Heart left ventricle (tissue), 16 donors: ENCODE measurements at regions of chr16 and their contacts with region 1.

Region 1: GRCh38 chr16:3059000-3059722 is 6.3 kb upstream of the IL32 start:
- DNase-seq: peak; percentile 91 to 96 (median 94)
- ATAC-seq: peak; percentile 78 to 95 (median 94)
- H3K4me3 ChIP-seq: peak overlapping the region; percentile 77 to 99 (median 94)
- H3K27ac ChIP-seq: peak overlapping the region; percentile 44 to 94 (median 88)
- H3K4me1 ChIP-seq: peaks cover 0 to 63% (median 19%) of the 10 kb centered on the region in 12 donors
- H3K27me3 ChIP-seq: no peaks in the 10 kb centered on the region
- CTCF ChIP-seq: peak; percentile 85 to 99 (median 96)
- POLR2A ChIP-seq: peak in 1 of 2 donors; percentile 58

Region 2: DNA sequence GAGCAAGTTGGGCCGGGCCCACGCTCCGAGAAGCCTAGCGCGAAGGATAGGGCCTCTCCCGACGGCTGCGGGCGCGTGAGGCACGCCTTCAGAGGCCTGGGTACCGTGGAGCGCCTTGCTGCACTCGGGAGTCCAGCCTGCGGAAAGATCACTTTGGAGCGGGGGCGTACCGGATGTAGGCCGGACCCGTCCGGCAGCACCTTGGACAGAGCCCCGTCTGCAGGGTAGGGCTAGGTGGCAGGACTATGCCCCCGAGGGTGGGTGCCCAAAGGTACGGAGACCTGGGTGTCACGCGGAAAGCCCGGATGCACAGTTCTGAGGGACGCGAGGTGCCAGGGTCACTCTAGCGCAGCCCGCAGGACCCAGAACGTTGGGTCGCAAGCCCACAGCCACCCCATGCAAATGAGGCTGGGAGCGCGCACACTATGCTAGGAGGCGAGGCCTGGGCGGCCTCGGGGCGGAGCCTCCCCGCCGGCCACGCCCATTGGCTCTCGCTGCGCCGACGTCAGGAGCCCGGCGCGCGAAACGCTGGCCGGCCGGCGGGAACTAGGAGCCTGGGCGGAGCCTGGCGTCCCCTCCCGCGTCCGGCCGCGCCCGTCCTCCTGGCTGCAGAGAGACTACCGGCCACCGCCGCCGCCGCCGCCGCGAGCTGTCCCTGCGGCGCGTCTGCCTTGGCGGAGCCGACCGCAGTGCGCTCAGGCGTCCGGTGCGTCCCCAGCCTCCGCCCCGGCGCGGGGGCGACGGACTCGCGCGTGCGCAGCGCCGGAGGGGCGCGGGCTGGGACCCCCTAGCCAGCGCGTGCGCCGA is 90.2 kb before region 1 on chr16 and contains the start of gene PAQR4:
- intact Hi-C with region 1: no loop called
- DNase-seq: peak; percentile 88 to 95 (median 90)
- ATAC-seq: peak; percentile 90 to 95 (median 92)
- H3K4me3 ChIP-seq: peak within 1 kb of the TSS; percentile 62 to 95 (median 78)
- H3K27ac ChIP-seq: peak within 1 kb of the TSS in 11 of 12 donors; percentile 24 to 79 (median 55)
- H3K4me1 ChIP-seq: peaks cover 3 to 64% (median 40%) of the 10 kb centered on the region in 12 donors
- H3K27me3 ChIP-seq: peaks cover 41 to 46% (median 42%) of the 10 kb centered on the region in 9 donors
- CTCF ChIP-seq: no peak
- POLR2A ChIP-seq: peak in 1 of 2 donors; percentile 77
- total RNA-seq, gene PAQR4: 6.9 to 16.3 (median 9.0) TPM

Region 3: DNA sequence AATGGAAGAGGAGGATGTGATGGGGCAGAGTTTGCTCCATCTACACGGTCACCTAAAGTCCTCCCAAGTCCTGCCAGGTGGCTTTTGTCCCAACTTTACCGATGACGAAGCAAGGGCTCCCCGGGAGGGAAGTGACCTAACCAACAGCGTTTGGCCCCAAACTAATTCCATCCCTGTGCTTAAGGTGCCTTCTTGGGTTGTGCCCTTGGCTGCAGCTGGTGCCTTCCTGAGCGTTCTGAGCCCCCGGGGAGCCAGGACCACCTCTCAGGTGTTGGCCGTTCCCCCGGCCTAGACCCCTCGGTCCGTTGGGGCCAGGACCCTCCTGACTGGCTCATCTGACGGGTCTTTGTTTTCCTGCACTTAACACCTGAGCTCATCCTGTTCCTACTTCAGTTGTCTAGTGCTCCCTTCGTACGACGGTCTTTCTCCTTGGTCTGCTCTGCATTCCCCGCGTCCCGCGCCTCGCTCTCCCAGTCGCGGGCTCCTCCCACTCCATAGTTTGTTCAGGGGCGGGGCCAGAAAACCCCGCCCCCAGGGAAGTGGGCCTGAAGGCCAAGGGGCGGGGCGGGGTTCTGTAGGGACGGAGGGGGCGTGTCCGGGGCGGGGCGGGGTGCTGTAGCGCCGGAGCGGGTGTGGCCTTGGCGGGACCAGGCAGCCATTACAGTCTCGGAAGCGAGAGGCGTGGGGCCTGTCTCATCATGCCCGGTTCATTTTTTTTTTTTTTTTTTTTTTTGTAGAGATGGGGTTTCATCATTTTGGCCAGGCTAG is 40.8 kb after region 1 on chr16:
- intact Hi-C with region 1: loop called in 2 of 10 experiments (anchors 5 kb)
- DNase-seq: peak; percentile 92 to 96 (median 93)
- ATAC-seq: peak; percentile 76 to 96 (median 94)
- H3K4me3 ChIP-seq: peak overlapping the region in 9 of 12 donors; percentile 17 to 40 (median 31)
- H3K27ac ChIP-seq: peak overlapping the region in 9 of 12 donors; percentile 55 to 91 (median 80)
- H3K4me1 ChIP-seq: peaks cover 9 to 48% (median 23%) of the 10 kb centered on the region in 12 donors
- H3K27me3 ChIP-seq: no peaks in the 10 kb centered on the region
- CTCF ChIP-seq: no peak
- POLR2A ChIP-seq: peak in 1 of 2 donors; percentile 9

Region 4: GRCh38 chr16:3123986-3124886 is 65.1 kb after region 1 on chr16:
- intact Hi-C with region 1: loop called in 9 of 10 experiments (anchors 1 to 5 kb)
- DNase-seq: peak; percentile 96 to 97 (median 97)
- ATAC-seq: peak; percentile 96 to 98 (median 98)
- H3K4me3 ChIP-seq: peak overlapping the region; percentile 58 to 91 (median 66)
- H3K27ac ChIP-seq: peak overlapping the region; percentile 14 to 91 (median 74)
- H3K4me1 ChIP-seq: peaks cover 0 to 47% (median 22%) of the 10 kb centered on the region in 12 donors
- H3K27me3 ChIP-seq: no peaks in the 10 kb centered on the region
- CTCF ChIP-seq: peak in 6 of 12 donors; percentile 22 to 42 (median 26)
- POLR2A ChIP-seq: no peak

Region 5: DNA sequence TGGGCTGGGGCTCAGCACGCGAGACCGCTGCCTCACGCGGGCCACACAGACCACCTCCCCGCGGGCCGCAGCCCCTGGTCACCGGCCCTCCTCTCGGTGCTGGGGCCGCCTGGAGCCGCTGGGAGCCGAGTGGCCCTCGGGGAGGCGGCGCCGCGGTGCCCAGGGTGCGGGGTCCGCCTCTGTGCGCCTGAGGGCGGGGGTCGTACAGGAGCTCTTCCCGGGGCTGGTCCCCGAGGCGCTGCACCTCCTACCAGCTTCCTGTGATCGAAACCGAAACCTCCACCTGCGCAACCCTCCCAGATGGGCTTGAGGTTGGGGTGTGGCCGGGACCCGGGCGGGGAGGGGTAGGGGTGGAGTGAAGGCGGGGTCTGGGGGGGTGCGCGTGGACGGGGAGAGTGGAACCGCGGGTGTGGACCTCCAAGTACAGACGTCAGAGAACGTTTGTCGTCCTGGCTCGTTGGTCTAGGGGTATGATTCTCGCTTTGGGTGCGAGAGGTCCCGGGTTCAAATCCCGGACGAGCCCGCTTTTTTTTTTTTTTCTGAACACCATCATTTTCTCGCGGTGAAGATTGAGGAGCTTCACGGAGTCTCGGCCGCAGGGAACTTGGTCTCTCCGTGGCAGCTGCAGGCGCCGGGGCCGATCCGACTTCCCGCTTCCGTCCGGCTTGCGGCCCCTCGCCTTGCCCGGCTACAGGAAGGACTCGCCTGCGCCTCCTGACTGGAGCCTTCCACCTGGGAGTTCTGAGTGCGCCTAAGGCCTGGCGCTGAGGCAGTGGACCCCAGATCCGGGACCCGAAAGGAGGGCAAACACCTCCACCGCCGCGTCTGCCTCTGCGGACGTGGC is 99.5 kb after region 1 on chr16:
- intact Hi-C with region 1: loop called in 2 of 10 experiments (anchors 5 to 10 kb)
- DNase-seq: peak; percentile 82 to 92 (median 88)
- ATAC-seq: peak; percentile 80 to 91 (median 88)
- H3K4me3 ChIP-seq: peak overlapping the region; percentile 47 to 84 (median 73)
- H3K27ac ChIP-seq: peak overlapping the region; percentile 81 to 94 (median 88)
- H3K4me1 ChIP-seq: peaks cover 0 to 25% (median 12%) of the 10 kb centered on the region in 12 donors
- H3K27me3 ChIP-seq: peaks cover 0 to 4% (median 0%) of the 10 kb centered on the region in 9 donors
- CTCF ChIP-seq: peak in 1 of 12 donors; percentile 14
- POLR2A ChIP-seq: no peak

Region 6: GRCh38 chr16:3457434-3458252 is 398.5 kb after region 1 on chr16:
- intact Hi-C with region 1: loop called in 1 of 10 experiments (anchors 10 kb)
- DNase-seq: peak; percentile 91 to 95 (median 93)
- ATAC-seq: peak; percentile 69 to 94 (median 90)
- H3K4me3 ChIP-seq: peak overlapping the region; percentile 74 to 99 (median 80)
- H3K27ac ChIP-seq: peak overlapping the region; percentile 94 to 99 (median 98)
- H3K4me1 ChIP-seq: peaks cover 16 to 64% (median 57%) of the 10 kb centered on the region in 12 donors
- H3K27me3 ChIP-seq: no peaks in the 10 kb centered on the region
- CTCF ChIP-seq: peak in 11 of 12 donors; percentile 24 to 64 (median 50)
- POLR2A ChIP-seq: peak in 1 of 2 donors; percentile 56